ENCODE measurements at regions of chr4 and their contacts with region 1.

Region 1: GRCh38 chr4:125266901-125267604 is 47.7 kb upstream of the FAT4 start:
- DNase-seq: no peak
- ATAC-seq: no peak
- H3K4me3 ChIP-seq: no peak overlapping the region
- H3K4me3 Mint-ChIP-seq: no peak overlapping the region
- H3K27ac ChIP-seq: no peak overlapping the region
- H3K27ac Mint-ChIP-seq: no peak overlapping the region
- H3K4me1 ChIP-seq: no peaks in the 10 kb centered on the region
- H3K4me1 Mint-ChIP-seq: no peaks in the 10 kb centered on the region
- H3K27me3 ChIP-seq: no peaks in the 10 kb centered on the region
- H3K27me3 Mint-ChIP-seq: no peaks in the 10 kb centered on the region
- CTCF ChIP-seq: no peak

Region 2: GRCh38 chr4:125382995-125383394 is 115.9 kb after region 1 on chr4:
- CTCF ChIA-PET with region 1: no interaction called
- POLR2A ChIA-PET with region 1: no interaction called
- intact Hi-C with region 1: no loop called
- DNase-seq: no peak
- ATAC-seq: no peak
- H3K4me3 ChIP-seq: no peak overlapping the region
- H3K4me3 Mint-ChIP-seq: no peak overlapping the region
- H3K27ac ChIP-seq: no peak overlapping the region
- H3K27ac Mint-ChIP-seq: no peak overlapping the region
- H3K4me1 ChIP-seq: no peaks in the 10 kb centered on the region
- H3K4me1 Mint-ChIP-seq: no peaks in the 10 kb centered on the region
- H3K27me3 ChIP-seq: no peaks in the 10 kb centered on the region
- H3K27me3 Mint-ChIP-seq: no peaks in the 10 kb centered on the region
- CTCF ChIP-seq: no peak

Region 3: DNA sequence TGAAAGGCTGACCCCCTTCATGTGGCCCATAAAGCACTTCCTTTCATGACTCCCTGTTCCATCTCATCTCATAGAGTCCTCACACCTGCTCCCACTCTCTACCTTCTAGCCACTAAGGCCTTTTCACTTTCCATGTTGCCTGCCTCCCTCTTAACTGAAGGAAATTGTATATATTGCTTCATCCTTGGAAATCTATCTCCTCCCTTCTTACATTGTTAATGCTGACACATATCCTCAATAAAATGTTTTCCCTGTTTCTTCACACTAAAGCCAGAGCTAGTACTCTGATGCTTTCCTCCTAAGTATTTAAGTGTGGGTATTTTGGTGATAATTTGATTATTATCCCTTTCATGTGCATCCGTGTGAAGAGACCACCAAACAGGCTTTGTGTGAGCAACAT is 877.8 kb after region 1 on chr4:
- CTCF ChIA-PET with region 1: no interaction called
- POLR2A ChIA-PET with region 1: no interaction called
- intact Hi-C with region 1: loop called in 1 of 2 experiments (anchors 5 kb)
- DNase-seq: no peak
- ATAC-seq: no peak
- H3K4me3 ChIP-seq: no peak overlapping the region
- H3K4me3 Mint-ChIP-seq: no peak overlapping the region
- H3K27ac ChIP-seq: no peak overlapping the region
- H3K27ac Mint-ChIP-seq: no peak overlapping the region
- H3K4me1 ChIP-seq: no peaks in the 10 kb centered on the region
- H3K4me1 Mint-ChIP-seq: no peaks in the 10 kb centered on the region
- H3K27me3 ChIP-seq: no peaks in the 10 kb centered on the region
- H3K27me3 Mint-ChIP-seq: no peaks in the 10 kb centered on the region
- CTCF ChIP-seq: no peak